Natural killer cell (primary cell): ENCODE measurements at regions of chr15 and their contacts with region 1.

Region 1: GRCh38 chr15:63188926-63189871 is at the start of gene RAB8B:
- DNase-seq: peak; percentile 95 to 96
- ATAC-seq: peak; percentile 72 to 91 (median 80)
- H3K4me3 ChIP-seq: peak within 1 kb of the TSS; percentile 89
- H3K4me3 Mint-ChIP-seq: peak within 1 kb of the TSS; percentile 97
- H3K27ac ChIP-seq: peak within 1 kb of the TSS; percentile 94
- H3K27ac Mint-ChIP-seq: peak within 1 kb of the TSS; percentile 93 to 99
- H3K4me1 ChIP-seq: peaks cover 25% of the 10 kb centered on the region
- H3K4me1 Mint-ChIP-seq: peaks cover 46 to 52% of the 10 kb centered on the region in 2 donors
- H3K27me3 ChIP-seq: no peaks in the 10 kb centered on the region
- H3K27me3 Mint-ChIP-seq: no peaks in the 10 kb centered on the region
- CTCF ChIP-seq: no peak
- total RNA-seq, gene RAB8B: 128 to 155 (median 137) TPM

Region 2: DNA sequence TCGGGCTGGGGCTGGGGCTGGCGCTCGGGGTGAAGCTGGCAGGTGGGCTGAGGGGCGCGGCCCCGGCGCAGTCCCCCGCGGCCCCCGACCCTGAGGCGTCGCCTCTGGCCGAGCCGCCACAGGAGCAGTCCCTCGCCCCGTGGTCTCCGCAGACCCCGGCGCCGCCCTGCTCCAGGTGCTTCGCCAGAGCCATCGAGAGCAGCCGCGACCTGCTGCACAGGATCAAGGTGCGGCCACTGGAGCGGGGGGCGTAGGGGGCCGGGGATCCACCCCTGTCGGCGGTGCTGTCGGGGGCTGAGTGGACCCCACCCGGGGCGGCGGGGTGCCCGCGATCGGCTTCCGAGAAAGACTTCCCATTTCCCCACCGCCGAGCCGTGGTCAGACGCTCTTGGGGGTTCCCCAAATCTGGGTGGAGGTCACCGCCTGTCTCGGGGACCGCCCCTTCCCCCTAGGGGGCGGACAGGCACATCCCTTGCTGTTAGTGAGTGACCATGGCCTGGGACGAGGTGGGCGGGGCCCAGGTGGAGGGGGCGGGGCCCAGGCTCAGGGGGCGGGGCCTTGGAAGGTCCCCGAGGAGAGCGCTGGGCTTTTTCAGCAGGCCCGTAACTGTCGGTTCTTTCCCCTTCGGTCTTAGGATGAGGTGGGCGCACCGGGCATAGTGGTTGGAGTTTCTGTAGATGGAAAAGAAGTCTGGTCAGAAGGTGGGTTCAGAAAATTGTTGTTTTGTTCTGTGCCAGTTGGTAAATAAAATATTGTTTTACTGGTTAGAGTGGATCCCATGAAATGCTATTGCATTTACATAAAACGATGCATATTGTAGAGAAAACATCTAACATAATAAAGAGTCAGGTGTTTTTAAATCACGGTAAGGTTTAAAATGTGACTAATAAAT is 67.0 kb before region 1 on chr15:
- intact Hi-C with region 1: loop called (anchors 5 kb)
- DNase-seq: peak; percentile 82 to 90
- ATAC-seq: peak; percentile 88 to 97 (median 90)
- H3K4me3 ChIP-seq: peak overlapping the region; percentile 96
- H3K4me3 Mint-ChIP-seq: peak overlapping the region; percentile 90
- H3K27ac ChIP-seq: peak overlapping the region; percentile 93
- H3K27ac Mint-ChIP-seq: peak overlapping the region; percentile 83 to 87
- H3K4me1 ChIP-seq: peaks cover 4% of the 10 kb centered on the region
- H3K4me1 Mint-ChIP-seq: peaks cover 12 to 19% of the 10 kb centered on the region in 2 donors
- H3K27me3 ChIP-seq: no peaks in the 10 kb centered on the region
- H3K27me3 Mint-ChIP-seq: no peaks in the 10 kb centered on the region
- CTCF ChIP-seq: no peak

Region 3: DNA sequence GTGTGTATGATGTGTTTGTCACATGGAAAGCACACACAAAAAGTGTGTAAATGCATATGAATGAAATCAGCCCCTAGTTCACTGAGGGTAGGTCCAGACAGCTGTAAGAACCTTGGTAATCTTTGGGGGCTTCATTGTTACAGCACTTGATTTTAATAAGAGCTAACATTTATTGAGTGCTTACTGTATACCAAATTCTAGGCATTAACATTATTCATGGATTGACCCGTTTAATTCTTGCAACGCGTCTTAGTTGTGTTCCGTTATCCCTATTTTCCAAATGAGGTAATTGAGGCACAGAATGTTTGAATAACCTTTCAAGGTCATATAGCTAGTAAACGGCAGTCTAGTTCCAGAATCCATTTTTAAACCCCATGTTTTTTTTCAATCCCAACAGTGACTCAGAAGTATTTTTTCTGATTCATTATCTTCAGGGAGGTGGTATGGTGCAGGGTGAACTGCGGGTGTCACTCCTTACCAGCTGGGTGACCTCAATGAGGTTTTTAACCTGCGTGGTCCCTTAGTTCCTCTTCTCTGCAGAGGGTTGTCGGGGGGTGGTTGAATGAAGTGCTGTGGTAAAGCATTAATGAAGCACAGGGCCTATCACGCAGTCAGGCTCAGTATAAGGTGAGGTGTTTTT is 14.4 kb after region 1 on chr15:
- intact Hi-C with region 1: loop called (anchors 1 kb)
- DNase-seq: peak; percentile 63 to 76
- ATAC-seq: peak; percentile 81 to 86 (median 82)
- H3K4me3 ChIP-seq: no peak overlapping the region
- H3K4me3 Mint-ChIP-seq: peak overlapping the region; percentile 76
- H3K27ac ChIP-seq: no peak overlapping the region
- H3K27ac Mint-ChIP-seq: peak overlapping the region; percentile 25 to 52
- H3K4me1 ChIP-seq: peaks cover 49% of the 10 kb centered on the region
- H3K4me1 Mint-ChIP-seq: peaks cover 86 to 94% of the 10 kb centered on the region in 2 donors
- H3K27me3 ChIP-seq: no peaks in the 10 kb centered on the region
- H3K27me3 Mint-ChIP-seq: no peaks in the 10 kb centered on the region
- CTCF ChIP-seq: no peak

Region 4: DNA sequence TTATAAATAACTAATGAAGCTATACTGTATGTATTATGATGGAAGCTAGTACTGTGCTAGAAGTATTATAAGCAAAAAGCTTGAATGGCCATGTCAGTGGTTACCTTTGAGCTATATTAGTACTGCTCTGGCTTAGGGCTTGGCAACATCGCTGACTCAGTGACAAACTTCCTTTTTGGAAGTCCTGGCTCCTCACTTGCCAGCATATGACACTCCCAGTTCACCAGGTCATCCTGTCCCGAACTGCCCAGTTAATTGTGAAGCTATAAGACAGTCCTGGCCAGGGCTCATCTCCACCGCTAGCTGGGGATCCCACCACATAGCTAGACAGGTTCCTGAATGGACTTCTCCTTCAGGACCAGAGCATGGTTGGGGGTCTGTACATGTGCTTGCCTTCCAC is 32.1 kb after region 1 on chr15:
- intact Hi-C with region 1: no loop called
- DNase-seq: no peak
- ATAC-seq: peak in 2 of 3 donors; percentile 22 to 24
- H3K4me3 ChIP-seq: no peak overlapping the region
- H3K4me3 Mint-ChIP-seq: peak overlapping the region; percentile 49
- H3K27ac ChIP-seq: no peak overlapping the region
- H3K27ac Mint-ChIP-seq: peak overlapping the region; percentile 23 to 67
- H3K4me1 ChIP-seq: peaks cover 5% of the 10 kb centered on the region
- H3K4me1 Mint-ChIP-seq: peaks cover 61 to 83% of the 10 kb centered on the region in 2 donors
- H3K27me3 ChIP-seq: no peaks in the 10 kb centered on the region
- H3K27me3 Mint-ChIP-seq: no peaks in the 10 kb centered on the region
- CTCF ChIP-seq: no peak

Region 5: DNA sequence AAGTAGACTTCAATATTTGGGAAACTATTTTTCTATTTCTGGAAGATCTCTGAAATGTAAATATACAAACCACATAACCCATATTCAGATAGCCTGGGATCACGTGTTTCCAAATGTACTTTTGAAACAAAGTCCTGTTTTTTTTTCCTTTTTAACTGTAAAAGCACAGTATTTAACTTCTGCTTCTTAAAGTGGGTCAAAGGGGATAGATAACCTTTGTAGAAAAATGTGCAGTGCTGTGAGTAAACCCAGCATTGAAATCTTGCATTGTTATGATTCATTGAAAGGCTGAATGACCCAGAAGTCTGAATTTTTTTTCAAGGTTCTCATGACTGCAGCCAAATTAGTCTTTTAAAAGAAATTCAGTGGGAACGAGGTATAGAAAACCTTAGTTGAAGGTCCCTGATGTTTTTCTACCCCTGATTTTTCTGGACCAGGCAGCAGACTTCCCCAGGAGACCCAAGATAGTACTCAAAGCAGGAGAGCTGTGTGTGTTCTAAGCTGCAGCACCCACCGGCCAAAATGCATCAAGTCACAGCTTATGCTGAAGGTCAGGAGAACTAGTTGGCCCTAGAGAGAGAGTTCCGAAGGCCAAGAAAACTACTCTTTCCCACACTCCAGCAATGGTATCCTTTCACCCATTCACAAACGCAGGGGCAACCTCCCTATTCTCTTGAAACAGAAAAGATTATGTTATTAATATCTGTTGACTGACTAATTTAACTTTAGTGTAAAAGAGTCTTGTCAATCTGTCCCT is 44.6 kb after region 1 on chr15:
- intact Hi-C with region 1: loop called (anchors 2 kb)
- DNase-seq: no peak
- ATAC-seq: no peak
- H3K4me3 ChIP-seq: no peak overlapping the region
- H3K4me3 Mint-ChIP-seq: peak overlapping the region; percentile 68
- H3K27ac ChIP-seq: peak overlapping the region; percentile 39
- H3K27ac Mint-ChIP-seq: peak overlapping the region; percentile 90 to 94
- H3K4me1 ChIP-seq: peaks cover 26% of the 10 kb centered on the region
- H3K4me1 Mint-ChIP-seq: peaks cover 72 to 75% of the 10 kb centered on the region in 2 donors
- H3K27me3 ChIP-seq: no peaks in the 10 kb centered on the region
- H3K27me3 Mint-ChIP-seq: no peaks in the 10 kb centered on the region
- CTCF ChIP-seq: no peak

Region 6: GRCh38 chr15:63504247-63504978 is 315.2 kb after region 1 on chr15 and contains the start of gene USP3:
- intact Hi-C with region 1: loop called (anchors 2 kb)
- DNase-seq: peak; percentile 93 to 96
- ATAC-seq: peak; percentile 69 to 90 (median 77)
- H3K4me3 ChIP-seq: peak within 1 kb of the TSS; percentile 85
- H3K4me3 Mint-ChIP-seq: peak within 1 kb of the TSS; percentile 96
- H3K27ac ChIP-seq: peak within 1 kb of the TSS; percentile 96
- H3K27ac Mint-ChIP-seq: peak within 1 kb of the TSS; percentile 87 to 93
- H3K4me1 ChIP-seq: peaks cover 46% of the 10 kb centered on the region
- H3K4me1 Mint-ChIP-seq: peaks cover 64 to 84% of the 10 kb centered on the region in 2 donors
- H3K27me3 ChIP-seq: no peaks in the 10 kb centered on the region
- H3K27me3 Mint-ChIP-seq: no peaks in the 10 kb centered on the region
- CTCF ChIP-seq: peak; percentile 40
- total RNA-seq, gene USP3: 163 to 187 (median 169) TPM

Region 7: GRCh38 chr15:64093627-64094417 is 904.6 kb after region 1 on chr15 and contains the start of gene CIAO2A:
- intact Hi-C with region 1: loop called (anchors 10 kb)
- DNase-seq: peak; percentile 80 to 97
- ATAC-seq: peak; percentile 72 to 83 (median 75)
- H3K4me3 ChIP-seq: peak within 1 kb of the TSS; percentile 74
- H3K4me3 Mint-ChIP-seq: peak within 1 kb of the TSS; percentile 100
- H3K27ac ChIP-seq: peak within 1 kb of the TSS; percentile 93
- H3K27ac Mint-ChIP-seq: peak within 1 kb of the TSS; percentile 98 to 99
- H3K4me1 ChIP-seq: peaks cover 52% of the 10 kb centered on the region
- H3K4me1 Mint-ChIP-seq: peaks cover 64 to 69% of the 10 kb centered on the region in 2 donors
- H3K27me3 ChIP-seq: no peaks in the 10 kb centered on the region
- H3K27me3 Mint-ChIP-seq: no peaks in the 10 kb centered on the region
- CTCF ChIP-seq: no peak
- total RNA-seq, gene CIAO2A: 20.2 to 23.9 (median 22.9) TPM